Gastrocnemius medialis (tissue), 4 donors: ENCODE measurements at regions of chr13 and their contacts with region 1.

Region 1: GRCh38 chr13:45807520-45808099 is 43.9 kb downstream of the SIAH3 start:
- DNase-seq: no peak
- ATAC-seq: peak; percentile 60 to 80
- H3K4me3 ChIP-seq: no peak overlapping the region
- H3K27ac ChIP-seq: no peak overlapping the region
- H3K4me1 ChIP-seq: no peaks in the 10 kb centered on the region
- H3K27me3 ChIP-seq: no peaks in the 10 kb centered on the region
- CTCF ChIP-seq: peak; percentile 21 to 66 (median 47)
- POLR2A ChIP-seq: no peak

Region 2: GRCh38 chr13:45879670-45880069 is 72.1 kb after region 1 on chr13:
- in situ Hi-C with region 1: no loop called
- intact Hi-C with region 1: loop called (anchors 2 kb)
- DNase-seq: peak; percentile 91 to 95
- ATAC-seq: peak; percentile 100
- H3K4me3 ChIP-seq: no peak overlapping the region
- H3K27ac ChIP-seq: peak overlapping the region; percentile 82 to 87 (median 84)
- H3K4me1 ChIP-seq: peaks cover 12 to 18% of the 10 kb centered on the region in 2 donors
- H3K27me3 ChIP-seq: no peaks in the 10 kb centered on the region
- CTCF ChIP-seq: peak; percentile 33 to 56 (median 48)
- POLR2A ChIP-seq: no peak

Region 3: DNA sequence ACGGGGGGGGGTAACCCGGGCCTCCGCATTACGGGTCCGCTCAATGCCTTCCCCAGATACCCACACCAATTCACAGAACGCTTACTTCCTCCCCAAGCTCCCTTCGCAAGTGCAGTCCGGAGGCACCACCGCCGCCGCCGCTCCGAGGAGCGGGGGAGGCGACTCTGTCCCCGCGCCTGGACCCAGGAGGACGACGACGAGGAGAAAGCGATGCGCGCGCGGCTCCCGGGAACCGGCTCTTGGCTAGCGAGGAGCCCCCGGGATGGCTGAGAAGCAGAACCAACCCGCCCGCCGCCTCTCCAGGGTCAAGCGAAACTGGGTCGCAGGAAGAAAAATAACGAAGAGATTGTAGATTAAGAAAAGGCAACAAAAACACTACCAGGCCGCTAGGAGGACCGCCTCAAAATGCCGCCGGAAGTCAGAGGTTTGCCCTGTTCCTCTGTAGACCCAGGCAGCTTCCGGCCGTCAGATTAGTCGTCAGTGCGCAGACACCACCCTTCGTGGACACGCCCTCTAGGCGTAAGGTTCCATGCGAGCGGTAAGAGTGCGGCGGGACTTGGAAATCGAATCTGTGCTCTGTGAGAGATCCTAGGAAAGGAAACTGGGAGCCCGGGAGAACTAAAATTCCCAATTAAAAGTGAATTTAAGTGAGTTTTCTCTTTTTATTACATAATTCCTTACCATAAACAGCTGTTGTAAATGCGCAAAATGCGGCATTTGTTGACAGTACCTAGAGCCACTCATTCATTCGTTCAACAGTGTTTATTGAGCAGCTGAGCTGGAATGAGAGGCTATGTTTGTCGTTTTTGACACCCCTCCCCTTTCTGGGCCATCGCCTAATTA is 244.9 kb after region 1 on chr13 and contains the start of gene ZC3H13:
- in situ Hi-C with region 1: no loop called
- intact Hi-C with region 1: loop called (anchors 5 kb)
- DNase-seq: peak; percentile 88 to 91
- ATAC-seq: peak; percentile 100
- H3K4me3 ChIP-seq: peak within 1 kb of the TSS; percentile 84 to 97 (median 90)
- H3K27ac ChIP-seq: peak within 1 kb of the TSS; percentile 88 to 96 (median 92)
- H3K4me1 ChIP-seq: peaks cover 27 to 28% of the 10 kb centered on the region in 2 donors
- H3K27me3 ChIP-seq: no peaks in the 10 kb centered on the region
- CTCF ChIP-seq: peak; percentile 24 to 52 (median 48)
- POLR2A ChIP-seq: peak; percentile 58 to 61
- total RNA-seq, gene ZC3H13: 14.7 to 20.7 (median 17.1) TPM

Region 4: DNA sequence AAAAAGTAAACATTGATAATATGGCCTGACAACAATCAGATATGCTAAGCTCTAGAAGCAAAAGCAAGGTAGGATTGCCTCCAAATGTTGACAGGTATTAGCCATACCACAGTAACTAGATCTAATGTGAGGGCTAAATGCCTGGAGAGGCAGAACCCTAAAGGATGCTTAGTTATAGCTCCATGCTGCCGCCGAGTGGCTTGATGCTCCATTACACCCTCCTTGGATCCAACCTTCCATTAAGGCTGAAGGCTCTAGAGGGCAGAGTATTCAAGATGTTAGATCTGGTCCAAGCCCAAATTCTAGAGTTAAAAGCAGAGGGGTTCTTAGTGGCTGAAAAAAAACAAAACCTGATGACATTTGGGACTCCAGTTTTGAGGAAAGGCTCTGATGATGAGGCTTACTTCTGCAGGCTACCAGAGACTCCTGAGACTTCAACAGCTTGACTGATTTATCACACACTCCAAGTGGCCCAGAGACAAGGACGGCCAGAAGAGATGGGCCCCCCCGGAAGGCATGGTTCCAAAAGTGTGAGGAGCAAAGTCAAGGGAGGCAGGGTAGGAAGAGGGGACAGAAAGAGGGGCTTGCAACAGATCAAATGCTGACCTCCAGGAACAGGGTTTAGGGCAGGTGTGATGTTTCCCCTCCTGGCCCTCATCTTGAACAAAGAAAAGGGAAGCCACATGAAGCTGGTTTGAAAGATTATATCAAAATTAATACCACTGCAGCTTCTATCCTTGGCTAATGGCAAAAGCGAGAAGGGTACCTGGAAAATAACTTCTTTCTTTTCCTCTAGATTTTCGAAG is 319.1 kb after region 1 on chr13:
- in situ Hi-C with region 1: loop called in 1 of 4 experiments (anchors 25 kb)
- intact Hi-C with region 1: loop called (anchors 2 kb)
- DNase-seq: peak in 1 of 2 donors; percentile 19
- ATAC-seq: peak in 1 of 2 donors; percentile 62
- H3K4me3 ChIP-seq: no peak overlapping the region
- H3K27ac ChIP-seq: no peak overlapping the region
- H3K4me1 ChIP-seq: no peaks in the 10 kb centered on the region
- H3K27me3 ChIP-seq: no peaks in the 10 kb centered on the region
- CTCF ChIP-seq: peak; percentile 22 to 53 (median 41)
- POLR2A ChIP-seq: no peak

Region 5: GRCh38 chr13:46160471-46161066 is 353.0 kb after region 1 on chr13:
- in situ Hi-C with region 1: loop called in 1 of 4 experiments (anchors 25 kb)
- intact Hi-C with region 1: loop called (anchors 5 kb)
- DNase-seq: no peak
- ATAC-seq: peak in 1 of 2 donors; percentile 49
- H3K4me3 ChIP-seq: no peak overlapping the region
- H3K27ac ChIP-seq: no peak overlapping the region
- H3K4me1 ChIP-seq: no peaks in the 10 kb centered on the region
- H3K27me3 ChIP-seq: no peaks in the 10 kb centered on the region
- CTCF ChIP-seq: peak; percentile 39 to 73 (median 54)
- POLR2A ChIP-seq: no peak